Mammary epithelial cell (primary cell): ENCODE measurements at regions of chr3 and their contacts with region 1.

Region 1: GRCh38 chr3:190120269-190121060 is at the start of gene P3H2:
- DNase-seq: peak; percentile 92
- H3K4me3 ChIP-seq: peak within 1 kb of the TSS; percentile 85 to 90 (median 90)
- H3K27ac ChIP-seq: peak within 1 kb of the TSS; percentile 93
- H3K4me1 ChIP-seq: peaks cover 50% of the 10 kb centered on the region
- H3K27me3 ChIP-seq: no peaks in the 10 kb centered on the region
- CTCF ChIP-seq: peak; percentile 14 to 58
- total RNA-seq, gene P3H2: 71.2 to 181 TPM

Region 2: DNA sequence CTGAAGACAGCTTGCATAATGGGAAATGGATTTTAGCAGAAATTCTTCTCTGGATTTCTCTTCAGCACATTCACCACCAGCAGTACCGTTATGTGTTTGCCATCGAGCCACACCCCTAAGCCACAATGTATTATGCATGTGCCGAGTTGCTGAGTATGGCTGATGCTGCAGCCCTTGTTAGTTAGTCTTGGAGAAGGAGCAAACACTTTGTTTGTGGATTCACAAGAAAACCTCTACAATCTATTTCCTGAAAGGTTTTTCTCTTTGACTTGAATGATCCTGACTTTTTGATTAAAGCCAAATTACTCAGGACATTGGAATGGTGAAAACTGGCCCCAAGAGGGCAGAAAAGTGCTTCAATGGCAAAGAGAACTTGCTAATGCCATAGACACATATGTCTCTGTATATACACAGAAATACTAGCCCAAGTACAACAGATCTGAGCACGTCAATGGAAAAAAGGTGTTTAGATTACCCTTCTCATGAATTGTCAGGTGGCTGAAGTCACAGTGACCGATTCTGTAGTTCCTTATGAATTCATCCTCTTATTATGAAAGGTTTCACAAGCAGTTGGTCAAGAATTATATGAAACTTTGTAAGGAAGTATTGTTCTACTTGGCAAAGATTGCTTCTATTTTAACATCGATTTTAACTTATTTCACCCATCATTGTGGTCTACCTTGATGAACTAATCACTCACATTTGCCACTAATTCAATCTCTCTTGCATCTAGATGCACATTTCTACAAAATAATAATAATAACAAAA is 102.8 kb before region 1 on chr3:
- CTCF ChIA-PET with region 1: no interaction called
- dilution Hi-C with region 1: no loop called
- in situ Hi-C with region 1: no loop called
- intact Hi-C with region 1: loop called (anchors 1 kb)
- DNase-seq: peak; percentile 70
- H3K4me3 ChIP-seq: no peak overlapping the region
- H3K27ac ChIP-seq: peak overlapping the region; percentile 19
- H3K4me1 ChIP-seq: peaks cover 42% of the 10 kb centered on the region
- H3K27me3 ChIP-seq: no peaks in the 10 kb centered on the region
- CTCF ChIP-seq: peak; percentile 41 to 53

Region 3: DNA sequence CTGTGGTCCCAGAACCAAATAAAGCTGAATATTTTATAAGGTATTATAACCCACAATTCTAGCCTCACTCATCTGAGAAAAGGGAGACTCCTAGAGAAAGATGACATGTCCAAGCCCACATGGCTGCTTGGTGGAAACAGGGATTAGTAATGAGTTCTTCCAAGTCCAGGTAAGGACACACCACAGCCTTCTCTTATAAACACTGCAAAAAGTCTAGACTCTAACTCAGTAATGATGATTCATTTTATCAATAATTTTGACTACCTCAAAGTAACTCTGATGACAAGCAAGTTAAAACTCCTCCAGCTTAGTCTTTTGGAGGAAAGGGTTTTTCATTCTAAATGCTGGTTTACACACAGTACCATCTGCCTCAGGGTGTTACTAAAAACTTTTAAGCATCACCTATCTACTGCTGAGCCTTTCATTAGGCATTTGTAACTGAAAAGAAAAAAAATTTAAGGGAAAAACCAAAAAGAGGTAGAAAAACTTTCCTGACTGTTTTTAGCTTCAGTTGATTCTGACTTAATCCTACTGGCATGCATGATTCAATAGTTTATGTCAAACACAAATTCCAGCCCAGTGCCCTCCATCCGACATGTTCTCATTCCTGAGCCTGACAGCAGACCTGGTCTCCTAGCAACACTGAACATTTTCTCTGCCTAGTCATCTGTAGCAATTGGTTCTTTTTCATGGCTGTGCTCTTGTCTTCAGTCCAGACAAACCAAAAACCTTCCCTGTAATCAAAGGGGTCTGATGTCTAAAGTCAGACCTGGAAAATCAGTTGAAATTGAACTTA is 43.7 kb before region 1 on chr3:
- CTCF ChIA-PET with region 1: no interaction called
- dilution Hi-C with region 1: no loop called
- in situ Hi-C with region 1: no loop called
- intact Hi-C with region 1: loop called (anchors 2 kb)
- DNase-seq: peak; percentile 91
- H3K4me3 ChIP-seq: no peak overlapping the region
- H3K27ac ChIP-seq: peak overlapping the region; percentile 93
- H3K4me1 ChIP-seq: peaks cover 27% of the 10 kb centered on the region
- H3K27me3 ChIP-seq: no peaks in the 10 kb centered on the region
- CTCF ChIP-seq: no peak

Region 4: DNA sequence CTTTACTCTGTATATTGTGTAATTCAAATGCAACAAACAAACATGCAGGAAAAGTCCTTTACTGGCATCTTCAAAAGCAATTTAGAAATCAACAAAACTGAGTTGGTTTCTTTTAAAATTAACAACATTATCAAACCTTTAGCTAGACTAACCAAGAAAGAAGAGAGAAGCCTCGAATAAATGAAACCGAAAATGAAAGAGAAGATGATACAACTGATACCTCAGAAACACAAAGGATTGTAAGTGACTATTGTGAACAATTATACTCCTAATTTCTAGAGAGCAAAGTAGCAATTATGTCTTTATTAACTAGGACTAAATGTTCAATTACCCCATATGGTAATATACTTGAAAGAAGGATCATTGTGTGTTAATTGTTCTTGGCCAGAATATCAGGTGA is 49.4 kb after region 1 on chr3:
- CTCF ChIA-PET with region 1: interaction called, 3 read pairs
- dilution Hi-C with region 1: no loop called
- in situ Hi-C with region 1: no loop called
- intact Hi-C with region 1: loop called (anchors 5 kb)
- DNase-seq: no peak
- H3K4me3 ChIP-seq: peak overlapping the region in 2 of 3 experiments; percentile 17 to 21
- H3K27ac ChIP-seq: peak overlapping the region; percentile 35
- H3K4me1 ChIP-seq: peaks cover 7% of the 10 kb centered on the region
- H3K27me3 ChIP-seq: no peaks in the 10 kb centered on the region
- CTCF ChIP-seq: no peak

Region 5: GRCh38 chr3:190197346-190197763 is 76.9 kb after region 1 on chr3:
- CTCF ChIA-PET with region 1: no interaction called
- dilution Hi-C with region 1: no loop called
- in situ Hi-C with region 1: loop called (anchors 5 to 10 kb)
- intact Hi-C with region 1: loop called (anchors 1 kb)
- DNase-seq: no peak
- H3K4me3 ChIP-seq: no peak overlapping the region
- H3K27ac ChIP-seq: no peak overlapping the region
- H3K4me1 ChIP-seq: no peaks in the 10 kb centered on the region
- H3K27me3 ChIP-seq: no peaks in the 10 kb centered on the region
- CTCF ChIP-seq: no peak

Region 6: DNA sequence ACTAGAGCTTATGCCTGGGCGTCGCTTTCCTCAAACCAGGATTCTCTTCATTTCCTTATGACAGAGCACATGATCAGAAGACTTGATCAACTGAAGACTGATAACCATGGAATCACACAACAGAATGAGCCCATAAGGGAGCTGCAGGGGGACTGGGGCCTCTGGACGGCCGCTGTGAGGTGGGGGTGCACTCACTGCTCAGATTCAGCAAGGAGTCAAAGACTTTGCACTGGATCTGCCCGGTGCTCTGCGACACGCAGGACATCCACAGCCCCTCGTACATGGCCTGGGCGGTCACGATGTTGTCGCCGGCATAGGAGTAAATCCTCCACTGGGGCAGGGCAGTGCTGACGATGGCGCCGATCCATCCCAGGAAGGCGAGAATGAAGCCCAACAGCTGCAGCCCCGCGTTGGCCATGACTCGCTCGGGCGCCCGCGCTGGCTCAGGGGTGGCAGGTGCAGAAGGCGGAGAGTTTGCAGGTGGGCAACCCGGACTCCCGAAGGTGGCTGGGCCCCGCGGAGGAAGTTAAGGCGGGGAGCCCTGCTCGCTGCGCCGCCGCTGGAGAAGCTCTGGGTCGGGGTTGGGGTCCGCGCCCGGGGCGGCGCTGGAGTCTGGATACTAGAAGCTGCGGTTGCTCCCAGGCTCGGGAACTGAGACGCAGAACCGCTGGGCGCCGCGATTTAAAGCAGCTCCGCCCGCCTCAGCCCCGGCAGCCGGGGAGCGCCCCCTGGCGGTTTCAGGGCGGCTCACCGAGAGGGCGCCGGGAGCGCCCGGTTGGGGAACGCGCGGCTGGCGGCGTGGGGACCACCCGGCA is 201.5 kb after region 1 on chr3 and contains the start of gene CLDN1:
- CTCF ChIA-PET with region 1: no interaction called
- dilution Hi-C with region 1: no loop called
- in situ Hi-C with region 1: no loop called
- intact Hi-C with region 1: loop called (anchors 10 kb)
- DNase-seq: peak; percentile 74
- H3K4me3 ChIP-seq: peak within 1 kb of the TSS; percentile 43 to 72 (median 51)
- H3K27ac ChIP-seq: peak within 1 kb of the TSS; percentile 9
- H3K4me1 ChIP-seq: peaks cover 37% of the 10 kb centered on the region
- H3K27me3 ChIP-seq: no peaks in the 10 kb centered on the region
- CTCF ChIP-seq: peak; percentile 69 to 97
- total RNA-seq, gene CLDN1: 12.3 to 78.7 TPM

Region 7: GRCh38 chr3:190467922-190468321 is 347.5 kb after region 1 on chr3:
- CTCF ChIA-PET with region 1: no interaction called
- dilution Hi-C with region 1: no loop called
- in situ Hi-C with region 1: no loop called
- intact Hi-C with region 1: no loop called
- DNase-seq: no peak
- H3K4me3 ChIP-seq: no peak overlapping the region
- H3K27ac ChIP-seq: no peak overlapping the region
- H3K4me1 ChIP-seq: no peaks in the 10 kb centered on the region
- H3K27me3 ChIP-seq: no peaks in the 10 kb centered on the region
- CTCF ChIP-seq: no peak